ENCODE measurements at regions of chr17 and their contacts with region 1.

Region 1: DNA sequence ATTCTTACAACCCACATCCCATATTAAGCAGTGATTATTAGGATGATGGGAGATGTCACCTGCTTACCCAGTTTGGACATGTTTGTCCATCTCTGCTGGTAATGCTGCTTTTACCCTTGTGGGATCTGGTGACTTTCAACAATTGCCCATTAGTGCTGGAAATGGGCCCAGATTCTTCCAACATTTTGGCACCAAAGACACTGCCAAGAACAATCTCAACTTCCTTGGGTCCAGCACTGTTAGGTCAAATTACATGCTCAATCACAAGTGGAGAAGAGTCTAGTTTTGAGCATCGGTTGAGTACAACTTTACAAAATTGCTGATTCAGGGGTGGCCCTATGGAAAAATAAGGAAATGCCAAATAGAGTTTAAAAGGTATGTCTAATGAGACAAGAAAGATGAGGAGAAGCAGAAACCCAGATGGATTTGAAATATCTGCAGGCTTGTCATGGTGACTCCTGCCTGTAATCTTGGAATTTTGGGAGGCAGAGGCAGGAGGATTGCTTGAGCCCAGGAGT is 13.0 kb upstream of the ZFP3 start:
- H3K4me3 ChIP-seq: no peak overlapping the region
- H3K27ac ChIP-seq: no peak overlapping the region
- H3K4me1 ChIP-seq: no peaks in the 10 kb centered on the region
- CTCF ChIP-seq: no peak

Region 2: GRCh38 chr17:4951455-4952160 is 113.7 kb before region 1 on chr17:
- CTCF ChIA-PET with region 1: no interaction called
- POLR2A ChIA-PET with region 1: no interaction called
- H3K4me3 ChIP-seq: no peak overlapping the region
- H3K27ac ChIP-seq: no peak overlapping the region; the same call in 1 of the 2 replicates
- H3K4me1 ChIP-seq: peaks cover 9% of the 10 kb centered on the region
- CTCF ChIP-seq: no peak

Region 3: DNA sequence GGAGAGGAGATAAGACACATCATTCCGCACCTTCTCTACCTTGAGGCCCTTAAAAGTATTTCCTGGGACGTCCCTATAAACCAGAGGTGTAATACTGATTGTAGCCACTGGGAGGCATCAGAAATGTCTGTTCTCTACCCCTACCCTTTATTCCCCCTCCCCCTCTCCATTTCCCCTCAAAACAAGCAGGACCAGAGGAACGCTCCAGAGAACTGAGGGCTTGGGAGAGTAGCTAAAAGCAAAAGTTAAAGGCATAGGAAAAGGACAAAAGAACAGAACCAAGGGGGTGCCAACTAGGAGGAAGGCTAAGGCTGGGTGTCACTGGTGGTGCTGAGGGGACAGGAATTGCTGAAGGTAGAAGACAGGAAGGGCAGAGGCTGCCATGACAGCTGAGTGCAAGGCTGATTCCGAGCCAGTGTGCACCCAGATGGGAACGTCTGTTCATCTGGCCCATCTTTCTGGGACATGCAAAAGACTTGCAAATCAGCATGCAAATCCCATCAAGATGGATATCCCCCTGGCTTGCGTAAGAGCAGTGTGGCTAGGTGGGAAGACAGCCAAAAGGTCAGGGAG is 84.6 kb before region 1 on chr17:
- CTCF ChIA-PET with region 1: interaction called, 43 read pairs
- POLR2A ChIA-PET with region 1: no interaction called
- H3K4me3 ChIP-seq: no peak overlapping the region
- H3K27ac ChIP-seq: no peak overlapping the region
- H3K4me1 ChIP-seq: no peaks in the 10 kb centered on the region
- CTCF ChIP-seq: peak; percentile 52

Region 4: DNA sequence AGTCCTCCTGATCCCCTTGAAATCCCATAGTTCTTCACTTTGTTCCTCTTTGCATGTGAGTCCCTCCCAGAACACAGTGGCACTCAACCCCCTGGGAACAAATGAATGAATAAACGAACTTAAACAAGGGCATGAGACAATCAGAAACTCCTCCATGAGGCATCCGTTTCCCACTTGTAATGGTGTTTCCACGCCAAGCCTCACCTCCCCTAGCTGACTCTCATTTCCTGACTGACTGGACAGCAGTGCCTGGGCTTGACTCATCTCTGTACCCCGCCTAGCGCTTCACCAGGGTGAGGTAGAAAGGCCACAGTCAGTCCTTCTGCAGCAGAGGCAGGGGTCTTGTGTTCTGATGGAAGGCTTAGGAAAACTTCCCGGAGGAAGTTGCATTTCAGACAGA is 53.4 kb before region 1 on chr17:
- CTCF ChIA-PET with region 1: no interaction called
- POLR2A ChIA-PET with region 1: no interaction called
- H3K4me3 ChIP-seq: no peak overlapping the region
- H3K27ac ChIP-seq: no peak overlapping the region
- H3K4me1 ChIP-seq: no peaks in the 10 kb centered on the region
- CTCF ChIP-seq: no peak

Region 5: GRCh38 chr17:5031365-5032082 is 33.8 kb before region 1 on chr17:
- CTCF ChIA-PET with region 1: interaction called, 42 read pairs
- POLR2A ChIA-PET with region 1: interaction called, 5 read pairs
- H3K4me3 ChIP-seq: peak overlapping the region; percentile 16
- H3K27ac ChIP-seq: no peak overlapping the region
- H3K4me1 ChIP-seq: 0 out of 2 replicates have a peak, but pooled peaks cover 2% of the 10 kb centered on the region
- CTCF ChIP-seq: peak; percentile 73

Measured in HEK293 (cell line).